ENCODE measurements at regions of chr7 and their contacts with region 1.

Region 1: DNA sequence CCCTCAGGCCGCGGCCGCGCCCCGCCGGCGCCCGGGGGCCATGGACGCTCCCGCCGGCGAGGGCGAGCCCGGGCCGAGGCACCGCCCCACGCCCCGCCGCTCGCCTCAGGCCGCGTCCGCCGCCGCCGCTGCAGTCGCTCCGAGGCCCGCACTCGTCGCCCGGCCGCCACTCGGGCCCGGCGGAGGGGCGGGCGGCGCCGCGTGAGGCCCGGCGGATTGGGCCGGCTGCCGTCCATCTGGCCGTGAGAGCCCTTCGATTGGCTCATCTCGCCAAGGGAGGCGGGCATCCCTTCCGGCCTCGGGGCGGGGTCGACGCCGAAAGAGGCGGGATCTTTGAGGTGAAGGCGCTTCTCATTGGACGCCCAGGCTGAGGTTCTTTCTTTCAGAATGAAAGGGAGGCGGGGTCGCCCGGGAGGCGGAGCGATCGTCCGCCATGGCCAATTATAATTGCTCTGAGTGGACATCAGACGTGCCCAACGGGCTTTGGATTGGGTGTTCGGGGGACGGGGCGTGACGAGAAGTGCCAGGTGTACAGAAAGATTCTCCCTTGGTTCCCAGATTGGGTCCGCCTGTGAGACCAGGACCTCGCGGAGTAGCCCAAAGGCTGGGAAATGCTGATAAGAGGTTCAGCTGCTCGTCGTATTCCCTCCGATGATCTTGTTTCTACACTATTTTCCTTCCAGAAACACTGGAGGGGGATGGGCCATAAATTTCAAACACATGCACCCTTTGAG is at the start of gene GNA12:
- DNase-seq: peak; percentile 100
- H3K4me3 ChIP-seq: peak within 1 kb of the TSS; percentile 57 to 89 (median 61)
- H3K27ac ChIP-seq: no peak within 1 kb of the TSS
- H3K4me1 ChIP-seq: peaks cover 2% of the 10 kb centered on the region
- H3K27me3 ChIP-seq: no peaks in the 10 kb centered on the region
- CTCF ChIP-seq: no peak
- POLR2A ChIP-seq: peak; percentile 30
- total RNA-seq, gene GNA12: 56.0 and 63.0 TPM in 2 replicates

Region 2: DNA sequence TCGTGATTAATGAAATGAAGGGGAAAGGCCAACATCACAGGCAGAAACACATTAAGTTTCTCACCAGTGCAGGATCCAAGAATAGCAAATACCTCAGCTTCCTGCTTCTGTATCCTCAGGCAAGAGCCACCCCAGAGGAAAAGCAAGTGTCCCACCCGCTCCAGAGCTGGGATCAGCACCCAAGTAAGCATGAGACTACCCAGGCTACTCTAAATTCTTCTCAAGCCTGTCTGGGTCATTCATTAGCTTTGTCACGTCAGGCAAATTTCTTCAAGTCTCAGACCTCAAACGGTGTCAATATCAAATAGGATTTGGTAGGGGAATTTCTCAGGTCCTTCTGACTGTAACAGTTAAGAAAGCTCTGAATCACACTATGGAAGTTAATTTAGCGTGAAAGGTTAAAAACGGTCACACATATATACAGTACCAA is 59.2 kb before region 1 on chr7:
- CTCF ChIA-PET with region 1: no interaction called
- POLR2A ChIA-PET with region 1: no interaction called
- dilution Hi-C with region 1: no loop called
- intact Hi-C with region 1: no loop called
- DNase-seq: peak; percentile 93
- H3K4me3 ChIP-seq: peak overlapping the region in 1 of 3 experiments; percentile 26
- H3K27ac ChIP-seq: peak overlapping the region; percentile 84
- H3K4me1 ChIP-seq: peaks cover 21% of the 10 kb centered on the region
- H3K27me3 ChIP-seq: no peaks in the 10 kb centered on the region
- CTCF ChIP-seq: no peak
- POLR2A ChIP-seq: no peak

Region 3: GRCh38 chr7:2870471-2870931 is 26.2 kb after region 1 on chr7:
- CTCF ChIA-PET with region 1: no interaction called
- POLR2A ChIA-PET with region 1: no interaction called
- dilution Hi-C with region 1: no loop called
- intact Hi-C with region 1: loop called (anchors 1 kb)
- DNase-seq: peak; percentile 90
- H3K4me3 ChIP-seq: no peak overlapping the region
- H3K27ac ChIP-seq: peak overlapping the region; percentile 6
- H3K4me1 ChIP-seq: peaks cover 18% of the 10 kb centered on the region
- H3K27me3 ChIP-seq: no peaks in the 10 kb centered on the region
- CTCF ChIP-seq: no peak
- POLR2A ChIP-seq: peak; percentile 23